HCT116 (cell line): ENCODE measurements at regions of chr9 and their contacts with region 1.

Region 1: GRCh38 chr9:16030513-16031185 is 477.8 kb downstream of the CCDC171 start:
- DNase-seq: peak; percentile 84
- ATAC-seq: peak; percentile 93
- H3K4me3 ChIP-seq: no peak overlapping the region
- H3K27ac ChIP-seq: no peak overlapping the region
- H3K4me1 ChIP-seq: peaks cover 10 to 38% of the 10 kb centered on the region in 2 experiments
- H3K27me3 ChIP-seq: no peaks in the 10 kb centered on the region
- CTCF ChIP-seq: no peak
- POLR2A ChIP-seq: no peak
- RAD21 ChIP-seq: 0 out of 2 replicates have a peak, but pooled peaks have one; percentile 5

Region 2: DNA sequence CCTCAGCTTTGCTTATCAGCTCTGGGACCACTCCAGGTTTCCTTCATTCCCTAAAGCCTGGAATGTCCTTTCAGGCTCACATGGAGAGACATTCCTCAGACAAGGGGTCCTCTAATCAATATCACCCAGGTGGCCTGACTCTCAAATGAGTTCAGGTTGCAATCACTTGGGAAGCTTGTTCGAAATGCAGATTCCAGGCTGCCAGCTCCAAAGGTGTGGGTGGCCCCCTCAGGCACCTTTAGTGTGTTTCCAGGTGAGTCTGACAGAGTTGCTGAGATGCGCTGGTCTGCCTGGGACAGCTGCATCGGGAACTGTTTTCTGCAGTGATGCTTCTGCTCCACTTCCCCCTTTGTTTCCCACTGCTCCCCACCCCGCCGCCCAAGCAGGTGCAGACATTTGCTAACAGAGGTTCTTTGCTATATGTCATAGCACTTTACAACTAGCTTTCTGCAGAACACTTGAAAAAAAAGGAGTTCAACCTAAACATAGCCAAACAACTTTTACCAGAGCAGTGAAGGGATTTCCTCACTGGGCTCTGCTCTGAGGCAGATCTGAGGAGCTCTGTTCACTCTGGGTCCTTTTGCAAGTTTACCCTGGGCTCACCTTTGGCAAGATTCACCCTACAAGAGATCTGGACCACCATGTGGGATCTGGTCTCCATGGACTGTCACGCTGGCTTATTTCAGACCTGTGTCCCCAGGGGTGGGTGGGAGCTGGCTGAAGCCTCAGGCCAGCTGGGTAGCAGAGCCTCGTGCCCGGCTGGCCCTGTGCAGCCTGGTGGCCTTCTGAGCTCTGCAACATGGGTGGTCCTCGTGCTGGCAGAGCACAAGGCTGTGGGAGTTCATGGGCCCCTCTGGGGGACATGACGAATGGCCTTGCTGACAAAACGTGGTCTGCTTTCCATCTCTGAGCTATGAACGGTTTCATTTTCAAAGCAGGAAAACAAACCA is 61.8 kb after region 1 on chr9:
- CTCF ChIA-PET with region 1: no interaction called
- POLR2A ChIA-PET with region 1: no interaction called
- RAD21 ChIA-PET with region 1: no interaction called
- intact Hi-C with region 1: loop called (anchors 10 kb)
- DNase-seq: no peak
- ATAC-seq: no peak
- H3K4me3 ChIP-seq: no peak overlapping the region
- H3K27ac ChIP-seq: no peak overlapping the region
- H3K4me1 ChIP-seq: no peaks in the 10 kb centered on the region
- H3K27me3 ChIP-seq: no peaks in the 10 kb centered on the region
- CTCF ChIP-seq: no peak
- POLR2A ChIP-seq: no peak
- RAD21 ChIP-seq: no peak